ENCODE measurements at regions of chr1 and their contacts with region 1.

Region 1: DNA sequence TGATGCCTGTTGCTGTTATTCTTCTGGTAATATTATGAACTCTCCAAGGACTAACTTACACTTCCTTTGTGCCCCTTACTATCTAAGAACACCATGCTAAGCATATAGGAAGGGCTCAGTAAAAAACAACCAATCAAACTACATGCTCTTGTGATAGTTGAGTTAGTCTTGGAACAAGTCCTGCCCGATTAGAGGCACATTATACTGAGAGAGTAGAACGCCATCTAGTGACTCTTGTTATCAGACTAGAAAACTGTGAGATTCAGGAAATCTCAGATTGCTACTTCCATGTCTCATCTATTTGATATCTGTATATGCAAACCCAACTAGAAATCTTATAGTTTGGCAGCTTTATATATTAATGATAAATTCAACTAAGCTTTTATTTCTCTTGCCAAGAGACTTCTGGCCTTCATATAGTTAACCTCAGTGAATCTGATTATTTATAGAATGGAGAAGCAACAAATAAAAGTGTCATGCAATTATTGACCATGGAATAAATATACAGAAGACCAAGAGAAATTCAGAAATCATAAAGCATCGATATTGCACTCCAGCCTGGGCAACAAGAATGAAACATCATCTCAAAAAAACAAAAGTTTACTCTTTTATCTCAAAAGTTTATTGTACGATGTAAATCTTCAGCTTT is 7.8 kb upstream of the SRRM1 start:
- DNase-seq: peak in 3 of 4 donors; percentile 15 to 57 (median 40)
- ATAC-seq: peak; percentile 84
- H3K4me3 ChIP-seq: no peak overlapping the region
- H3K27ac ChIP-seq: no peak overlapping the region
- H3K4me1 ChIP-seq: peaks cover 4% of the 10 kb centered on the region
- H3K27me3 ChIP-seq: no peaks in the 10 kb centered on the region
- CTCF ChIP-seq: peak; percentile 23 to 80 (median 70)
- POLR2A ChIP-seq: no peak

Region 2: GRCh38 chr1:24558902-24559791 is 76.2 kb before region 1 on chr1:
- intact Hi-C with region 1: loop called (anchors 10 kb)
- DNase-seq: peak; percentile 57 to 78 (median 73)
- ATAC-seq: peak; percentile 34
- H3K4me3 ChIP-seq: no peak overlapping the region
- H3K27ac ChIP-seq: peak overlapping the region in 3 of 4 donors; percentile 82 to 88 (median 84)
- H3K4me1 ChIP-seq: peaks cover 70% of the 10 kb centered on the region
- H3K27me3 ChIP-seq: no peaks in the 10 kb centered on the region
- CTCF ChIP-seq: no peak
- POLR2A ChIP-seq: peak in 1 of 3 donors; percentile 21

Region 3: DNA sequence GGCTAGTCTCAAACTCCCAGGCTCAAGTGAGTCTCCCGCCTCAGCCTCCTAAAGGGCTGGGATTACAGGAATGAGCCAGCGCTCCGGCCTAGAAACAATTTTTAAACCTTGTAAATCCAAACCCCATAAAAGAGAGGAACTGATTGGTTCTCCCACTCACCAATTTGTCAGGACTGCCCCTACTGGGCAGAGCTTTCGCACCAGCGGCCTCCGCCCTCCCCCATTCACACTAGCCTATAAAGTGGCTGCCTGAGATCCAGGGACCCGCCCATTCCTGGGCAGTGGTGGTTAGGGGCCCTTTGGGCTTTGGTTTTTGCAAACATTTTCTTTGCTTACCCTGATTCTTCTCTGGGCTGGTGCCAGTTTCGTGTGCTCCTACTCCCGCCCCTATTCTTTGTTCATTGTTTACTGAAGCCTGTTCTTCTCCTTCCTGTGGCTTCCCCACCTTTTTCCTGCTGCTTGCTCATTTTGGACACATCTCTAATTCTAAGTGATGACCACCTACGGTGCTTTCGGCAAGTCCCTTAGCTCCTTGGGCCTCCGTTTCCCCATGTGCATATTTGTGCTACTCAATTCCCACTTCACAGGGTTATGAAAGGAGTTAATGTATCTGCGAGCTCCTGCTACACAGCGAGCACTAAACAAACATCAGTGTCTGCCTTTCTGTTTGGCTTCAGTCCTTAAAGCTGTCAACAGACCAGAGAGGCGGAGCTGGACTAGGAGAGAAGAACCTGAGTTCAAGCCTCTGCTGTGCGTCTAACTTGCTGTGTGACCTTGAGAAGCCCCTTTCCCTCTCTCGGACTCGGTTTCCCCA is 70.1 kb after region 1 on chr1:
- intact Hi-C with region 1: no loop called
- DNase-seq: peak; percentile 73 to 90 (median 80)
- ATAC-seq: peak; percentile 98
- H3K4me3 ChIP-seq: no peak overlapping the region
- H3K27ac ChIP-seq: peak overlapping the region; percentile 39 to 78 (median 70)
- H3K4me1 ChIP-seq: peaks cover 9% of the 10 kb centered on the region
- H3K27me3 ChIP-seq: no peaks in the 10 kb centered on the region
- CTCF ChIP-seq: no peak
- POLR2A ChIP-seq: peak in 1 of 3 donors; percentile 16

Measured in body of pancreas (tissue), 4 donors.